Naive thymus-derived CD8-positive, alpha-beta T cell (primary cell): ENCODE measurements at regions of chr19 and their contacts with region 1.

Region 1: GRCh38 chr19:37885392-37885791 is 21.0 kb downstream of the WDR87 start:
- DNase-seq: no peak
- ATAC-seq: no peak
- H3K4me3 Mint-ChIP-seq: no peak overlapping the region
- H3K27ac Mint-ChIP-seq: no peak overlapping the region
- H3K4me1 Mint-ChIP-seq: no peaks in the 10 kb centered on the region
- H3K27me3 Mint-ChIP-seq: no peaks in the 10 kb centered on the region

Region 2: DNA sequence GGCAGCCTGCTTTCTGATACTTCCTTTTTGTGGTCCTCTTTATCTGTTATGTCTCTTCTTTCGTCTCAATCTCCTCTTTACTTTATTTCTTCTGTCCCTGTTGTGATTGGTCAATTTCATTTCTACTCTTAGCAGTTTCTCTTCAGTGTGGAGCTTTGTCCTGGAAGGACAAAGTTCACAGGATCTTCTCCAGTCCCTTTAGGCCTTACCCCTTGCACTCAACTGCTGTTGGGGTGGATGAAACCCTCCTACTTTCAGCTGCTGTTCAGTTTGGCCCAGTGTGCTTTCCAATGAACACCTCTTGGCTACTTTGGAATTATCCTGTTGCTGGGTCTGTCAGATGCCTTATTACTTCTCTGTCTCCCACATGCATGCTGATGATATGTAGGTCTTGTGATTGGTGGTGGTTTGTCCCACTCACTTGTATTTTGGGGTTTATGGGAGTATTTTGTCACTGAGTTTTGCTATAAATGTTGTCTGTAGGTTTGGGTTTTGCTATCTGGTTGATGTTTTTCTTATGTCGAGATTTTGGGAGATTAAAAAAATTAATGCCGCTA is 1805.9 kb before region 1 on chr19:
- POLR2A ChIA-PET with region 1: interaction called, 11 read pairs
- DNase-seq: no peak
- ATAC-seq: no peak
- H3K4me3 Mint-ChIP-seq: no peak overlapping the region
- H3K27ac Mint-ChIP-seq: peak overlapping the region in 3 of 10 donors; percentile 9 to 57 (median 21)
- H3K4me1 Mint-ChIP-seq: no peaks in the 10 kb centered on the region
- H3K27me3 Mint-ChIP-seq: no peaks in the 10 kb centered on the region